CD8-positive, alpha-beta memory T cell (primary cell): ENCODE measurements at regions of chr12 and their contacts with region 1.

Region 1: GRCh38 chr12:9741726-9742125 is 8.8 kb upstream of the CLECL1 start:
- DNase-seq: peak; percentile 50 to 90 (median 89)
- H3K4me3 ChIP-seq: peak overlapping the region; percentile 33
- H3K4me3 Mint-ChIP-seq: peak overlapping the region; percentile 33 to 88 (median 82)
- H3K27ac ChIP-seq: peak overlapping the region; percentile 60
- H3K27ac Mint-ChIP-seq: peak overlapping the region; percentile 19 to 99 (median 97)
- H3K4me1 ChIP-seq: peaks cover 62% of the 10 kb centered on the region
- H3K4me1 Mint-ChIP-seq: peaks cover 53 to 80% (median 75%) of the 10 kb centered on the region in 3 donors
- H3K27me3 ChIP-seq: no peaks in the 10 kb centered on the region
- H3K27me3 Mint-ChIP-seq: no peaks in the 10 kb centered on the region

Region 2: DNA sequence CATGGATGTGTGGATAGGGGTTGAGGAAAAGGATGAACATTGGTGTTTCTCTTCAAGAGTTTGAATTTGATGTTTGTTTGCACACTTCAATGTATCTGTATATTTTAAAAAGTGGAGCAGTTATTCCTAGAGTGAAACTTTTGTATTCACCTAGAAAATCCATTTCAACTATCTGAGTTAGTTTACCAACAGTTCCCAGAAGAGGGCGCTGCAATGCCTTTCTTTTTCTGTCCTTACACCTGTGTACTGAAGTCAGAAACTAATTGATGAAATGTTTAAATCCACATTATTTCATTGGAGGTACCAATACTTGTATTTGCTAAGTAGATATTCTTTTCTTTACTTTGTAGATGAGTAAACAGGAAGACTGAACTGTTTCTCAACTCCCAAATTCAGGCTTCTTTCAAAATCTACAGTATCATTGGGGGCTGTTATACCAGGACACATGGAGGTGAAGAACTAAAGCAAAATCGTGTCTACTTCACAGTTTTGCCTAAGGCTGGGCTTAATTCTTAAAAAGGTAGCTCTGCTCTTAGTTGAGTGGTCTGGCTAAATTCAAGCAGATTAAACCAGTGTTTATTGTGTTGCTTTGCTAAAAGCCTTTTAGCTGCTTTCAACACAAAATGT is 107.4 kb before region 1 on chr12:
- CTCF ChIA-PET with region 1: interaction called, 17 read pairs
- POLR2A ChIA-PET with region 1: no interaction called
- DNase-seq: peak; percentile 64 to 80 (median 68)
- H3K4me3 ChIP-seq: peak overlapping the region; percentile 1
- H3K4me3 Mint-ChIP-seq: peak overlapping the region in 5 of 7 donors; percentile 18 to 63 (median 43)
- H3K27ac ChIP-seq: no peak overlapping the region
- H3K27ac Mint-ChIP-seq: peak overlapping the region; percentile 11 to 93 (median 88)
- H3K4me1 ChIP-seq: peaks cover 57% of the 10 kb centered on the region
- H3K4me1 Mint-ChIP-seq: peaks cover 44 to 83% (median 79%) of the 10 kb centered on the region in 3 donors
- H3K27me3 ChIP-seq: no peaks in the 10 kb centered on the region
- H3K27me3 Mint-ChIP-seq: peaks cover 0 to 2% of the 10 kb centered on the region in 2 donors

Region 3: GRCh38 chr12:9687228-9687627 is 54.5 kb before region 1 on chr12:
- CTCF ChIA-PET with region 1: no interaction called
- POLR2A ChIA-PET with region 1: no interaction called
- DNase-seq: no peak
- H3K4me3 ChIP-seq: no peak overlapping the region
- H3K4me3 Mint-ChIP-seq: peak overlapping the region in 6 of 7 donors; percentile 3 to 73 (median 52)
- H3K27ac ChIP-seq: no peak overlapping the region
- H3K27ac Mint-ChIP-seq: peak overlapping the region in 7 of 8 donors; percentile 68 to 96 (median 74)
- H3K4me1 ChIP-seq: peaks cover 48% of the 10 kb centered on the region
- H3K4me1 Mint-ChIP-seq: peaks cover 64 to 89% (median 84%) of the 10 kb centered on the region in 3 donors
- H3K27me3 ChIP-seq: no peaks in the 10 kb centered on the region
- H3K27me3 Mint-ChIP-seq: peaks cover 0 to 1% of the 10 kb centered on the region in 2 donors

Region 4: GRCh38 chr12:9797722-9798619 is 56.2 kb after region 1 on chr12:
- CTCF ChIA-PET with region 1: interaction called, 359 read pairs
- POLR2A ChIA-PET with region 1: interaction called, 4 read pairs
- DNase-seq: peak; percentile 26 to 83 (median 71)
- H3K4me3 ChIP-seq: no peak overlapping the region
- H3K4me3 Mint-ChIP-seq: peak overlapping the region in 4 of 7 donors; percentile 11 to 38 (median 25)
- H3K27ac ChIP-seq: no peak overlapping the region
- H3K27ac Mint-ChIP-seq: peak overlapping the region in 6 of 8 donors; percentile 1 to 96 (median 76)
- H3K4me1 ChIP-seq: peaks cover 52% of the 10 kb centered on the region
- H3K4me1 Mint-ChIP-seq: peaks cover 48 to 54% (median 48%) of the 10 kb centered on the region in 3 donors
- H3K27me3 ChIP-seq: no peaks in the 10 kb centered on the region
- H3K27me3 Mint-ChIP-seq: no peaks in the 10 kb centered on the region